ENCODE measurements at regions of chr4 and their contacts with region 1.

Region 1: GRCh38 chr4:184688447-184688846 is 38.9 kb downstream of the PRIMPOL start:
- DNase-seq: peak; percentile 90
- ATAC-seq: peak; percentile 99
- H3K4me3 ChIP-seq: no peak overlapping the region
- H3K27ac ChIP-seq: peak overlapping the region; percentile 81
- H3K4me1 ChIP-seq: peaks cover 15% of the 10 kb centered on the region
- H3K27me3 ChIP-seq: no peaks in the 10 kb centered on the region
- CTCF ChIP-seq: no peak

Region 2: GRCh38 chr4:184733654-184734524 is 45.4 kb after region 1 on chr4 and contains the start of gene CENPU:
- CTCF ChIA-PET with region 1: no interaction called
- POLR2A ChIA-PET with region 1: no interaction called
- intact Hi-C with region 1: loop called (anchors 1 kb)
- DNase-seq: peak; percentile 96
- ATAC-seq: peak; percentile 82
- H3K4me3 ChIP-seq: peak within 1 kb of the TSS; percentile 95
- H3K27ac ChIP-seq: peak within 1 kb of the TSS; percentile 71
- H3K4me1 ChIP-seq: peaks cover 16% of the 10 kb centered on the region
- H3K27me3 ChIP-seq: no peaks in the 10 kb centered on the region
- CTCF ChIP-seq: no peak
- total RNA-seq, gene CENPU: 27.6 and 38.2 TPM in 2 replicates